Sigmoid colon (tissue), 7 donors: ENCODE measurements at regions of chr16 and their contacts with region 1.

Region 1: GRCh38 chr16:81238296-81239011 is at the start of gene BCO1:
- DNase-seq: no peak
- H3K4me3 ChIP-seq: peak within 1 kb of the TSS; percentile 22 to 41 (median 39)
- H3K27ac ChIP-seq: peak within 1 kb of the TSS; percentile 74 to 91 (median 86)
- H3K4me1 ChIP-seq: peaks cover 0 to 23% (median 21%) of the 10 kb centered on the region in 4 donors
- H3K27me3 ChIP-seq: no peaks in the 10 kb centered on the region
- CTCF ChIP-seq: no peak
- EP300 ChIP-seq: peak in 1 of 4 donors; percentile 49
- POLR2A ChIP-seq: no peak
- total RNA-seq, gene BCO1: 0.83 to 3.1 (median 2.1) TPM in 3 of 4 donors, not detected in the other

Region 2: DNA sequence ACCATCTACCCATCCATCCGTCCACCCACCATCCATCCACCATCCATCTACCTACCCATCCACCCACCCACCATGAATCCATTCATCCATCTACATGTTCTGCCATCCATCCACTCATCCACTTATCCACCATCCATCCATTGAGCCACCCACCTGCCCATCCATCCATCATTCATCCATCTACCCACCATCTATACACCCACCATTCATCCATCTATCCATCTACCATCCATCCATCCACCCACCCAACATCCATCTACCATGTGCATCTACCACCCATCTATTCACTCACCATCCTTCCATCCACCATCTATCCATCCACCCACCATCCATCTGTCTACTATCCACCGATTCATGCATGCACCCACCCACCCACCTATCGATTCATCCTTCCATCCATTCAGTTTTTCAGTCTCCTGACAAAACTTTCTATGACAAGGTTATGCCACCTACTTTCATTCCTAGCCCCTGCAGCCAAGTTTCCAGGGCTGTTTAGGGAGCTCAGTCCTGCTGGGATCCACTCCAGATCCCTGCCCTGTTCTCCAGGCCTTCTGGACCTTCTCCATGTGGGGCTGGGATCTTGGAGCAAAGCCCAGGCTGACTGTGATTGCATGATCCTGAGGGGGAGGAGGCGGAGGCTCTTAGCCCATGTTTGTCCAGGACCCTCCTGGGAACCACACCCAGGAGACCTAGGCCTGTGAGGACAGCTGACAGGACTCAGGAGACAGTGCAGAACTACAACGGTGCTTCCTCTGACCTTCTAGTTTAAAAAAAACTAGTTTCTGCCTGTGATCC is 27.4 kb after region 1 on chr16:
- intact Hi-C with region 1: loop called (anchors 2 kb)
- DNase-seq: peak; percentile 95
- H3K4me3 ChIP-seq: no peak overlapping the region
- H3K27ac ChIP-seq: peak overlapping the region in 3 of 4 donors; percentile 76 to 78 (median 77)
- H3K4me1 ChIP-seq: peaks cover 0 to 46% (median 35%) of the 10 kb centered on the region in 4 donors
- H3K27me3 ChIP-seq: no peaks in the 10 kb centered on the region
- CTCF ChIP-seq: no peak
- EP300 ChIP-seq: peak in 1 of 4 donors; percentile 63
- POLR2A ChIP-seq: no peak